Mammary epithelial cell (primary cell): ENCODE measurements at regions of chr9 and their contacts with region 1.

Region 1: DNA sequence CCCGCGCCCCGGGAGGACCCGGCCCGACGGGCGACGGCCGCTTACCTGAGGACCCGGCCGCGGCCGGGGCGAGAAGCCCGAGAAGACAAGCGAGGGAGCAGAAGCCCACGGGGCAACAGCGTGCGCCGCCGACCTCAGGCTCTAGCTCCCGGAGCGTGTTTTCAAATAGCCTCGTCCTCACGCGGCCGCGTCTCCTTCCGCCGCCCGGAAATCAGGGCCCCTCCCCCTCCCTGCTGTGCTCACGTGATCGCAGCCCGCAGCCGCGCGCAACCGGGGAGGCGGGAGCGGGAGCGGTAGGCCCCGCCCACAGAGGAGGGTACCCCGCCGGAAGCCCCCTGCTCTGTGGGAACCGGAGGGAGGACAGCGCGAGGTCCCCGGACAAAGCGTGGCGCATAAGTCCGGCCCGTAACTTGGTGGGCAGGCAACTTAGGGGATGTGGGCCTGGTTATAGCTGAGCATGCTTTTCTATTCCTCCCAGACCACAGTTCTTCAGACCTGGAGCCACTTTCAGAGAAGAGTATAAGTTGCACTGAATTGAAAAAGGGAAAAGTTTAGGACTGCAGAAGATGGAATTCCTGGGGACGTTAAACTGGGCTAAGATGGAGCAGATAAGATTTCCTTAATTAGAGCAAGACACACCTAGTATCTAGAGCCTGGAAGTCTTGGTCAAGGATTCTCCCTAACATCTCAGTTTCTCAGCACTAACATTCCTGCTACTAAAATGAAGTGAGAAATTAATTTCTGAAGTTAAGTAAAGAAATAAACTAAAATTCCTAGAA is at the start of gene TEX10:
- DNase-seq: peak; percentile 73
- H3K4me3 ChIP-seq: peak within 1 kb of the TSS; percentile 54 to 86 (median 78)
- H3K27ac ChIP-seq: peak within 1 kb of the TSS; percentile 74
- H3K4me1 ChIP-seq: peaks cover 13% of the 10 kb centered on the region
- H3K27me3 ChIP-seq: no peaks in the 10 kb centered on the region
- CTCF ChIP-seq: no peak
- total RNA-seq, gene TEX10: 30.3 to 36.8 TPM

Region 2: DNA sequence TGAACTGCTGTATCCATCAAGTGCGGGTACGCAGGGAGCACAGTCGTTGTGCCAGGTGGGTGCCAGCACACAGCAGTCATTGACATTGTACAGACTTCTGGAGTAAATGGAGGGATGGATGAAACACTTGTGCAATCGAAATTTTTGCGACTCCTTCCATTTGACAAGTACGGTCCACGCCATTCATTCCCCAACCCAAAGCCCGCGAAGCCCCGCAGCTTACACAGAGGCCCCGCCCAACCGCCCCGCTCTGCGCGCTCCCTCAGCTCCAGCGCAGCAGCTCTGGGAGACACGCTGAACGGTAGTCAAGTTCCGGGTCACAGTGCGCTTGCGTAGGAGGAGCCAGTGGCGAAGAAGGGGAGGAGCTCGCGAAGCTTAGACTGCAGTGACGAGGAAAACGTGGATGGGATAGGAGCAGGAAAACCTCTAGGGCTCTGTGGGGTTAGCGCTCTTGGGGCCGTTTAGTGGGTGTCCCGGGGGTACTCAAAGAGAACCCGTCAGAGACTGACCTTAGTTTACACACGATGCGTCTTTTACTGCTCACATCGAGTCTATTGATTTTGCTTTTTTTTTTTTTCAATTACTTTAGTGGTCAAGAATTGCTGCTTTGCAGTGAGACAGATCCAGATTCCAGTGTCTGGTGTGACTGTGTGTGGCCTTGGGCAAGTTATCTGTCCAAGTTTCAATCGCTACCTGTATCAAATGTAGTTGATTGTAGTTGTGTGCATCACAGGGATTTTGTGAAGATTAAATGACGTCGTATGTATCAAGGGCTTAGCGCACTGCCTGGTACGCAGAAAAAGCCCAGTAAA is 58.8 kb after region 1 on chr9:
- CTCF ChIA-PET with region 1: no interaction called
- dilution Hi-C with region 1: no loop called
- in situ Hi-C with region 1: no loop called
- intact Hi-C with region 1: loop called (anchors 1 kb)
- DNase-seq: peak; percentile 77
- H3K4me3 ChIP-seq: peak overlapping the region; percentile 32 to 54 (median 40)
- H3K27ac ChIP-seq: no peak overlapping the region
- H3K4me1 ChIP-seq: peaks cover 9% of the 10 kb centered on the region
- H3K27me3 ChIP-seq: no peaks in the 10 kb centered on the region
- CTCF ChIP-seq: no peak

Region 3: GRCh38 chr9:100437860-100438805 is 85.2 kb after region 1 on chr9:
- CTCF ChIA-PET with region 1: no interaction called
- dilution Hi-C with region 1: no loop called
- in situ Hi-C with region 1: loop called in 1 of 2 experiments (anchors 5 kb)
- intact Hi-C with region 1: loop called (anchors 1 kb)
- DNase-seq: peak; percentile 62
- H3K4me3 ChIP-seq: no peak overlapping the region
- H3K27ac ChIP-seq: no peak overlapping the region
- H3K4me1 ChIP-seq: no peaks in the 10 kb centered on the region
- H3K27me3 ChIP-seq: no peaks in the 10 kb centered on the region
- CTCF ChIP-seq: peak; percentile 94 to 98